Mammary epithelial cell (primary cell): ENCODE measurements at regions of chr1 and their contacts with region 1.

Region 1: DNA sequence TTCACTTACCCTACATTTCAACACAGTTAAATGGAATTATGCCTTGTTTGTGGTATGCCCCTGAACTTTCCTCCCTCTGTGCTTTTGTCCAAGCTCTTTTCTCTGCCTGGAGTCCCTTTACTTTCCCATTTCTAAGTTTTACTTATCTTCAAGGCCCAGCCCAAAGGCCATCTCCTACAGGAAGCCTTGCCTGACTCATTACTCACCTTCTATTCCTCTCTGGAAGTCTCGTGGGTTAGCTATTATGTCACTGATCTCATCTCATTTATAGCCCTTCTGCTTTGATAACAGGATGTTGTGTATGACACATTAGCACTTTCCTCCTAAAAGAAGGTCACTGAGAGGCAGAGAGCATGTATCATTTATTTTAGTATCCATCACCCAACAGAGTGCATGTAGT is 78.8 kb upstream of the CD1D start:
- DNase-seq: peak; percentile 75
- H3K4me3 ChIP-seq: no peak overlapping the region
- H3K27ac ChIP-seq: no peak overlapping the region
- H3K4me1 ChIP-seq: peaks cover 14% of the 10 kb centered on the region
- H3K27me3 ChIP-seq: no peaks in the 10 kb centered on the region
- CTCF ChIP-seq: no peak

Region 2: DNA sequence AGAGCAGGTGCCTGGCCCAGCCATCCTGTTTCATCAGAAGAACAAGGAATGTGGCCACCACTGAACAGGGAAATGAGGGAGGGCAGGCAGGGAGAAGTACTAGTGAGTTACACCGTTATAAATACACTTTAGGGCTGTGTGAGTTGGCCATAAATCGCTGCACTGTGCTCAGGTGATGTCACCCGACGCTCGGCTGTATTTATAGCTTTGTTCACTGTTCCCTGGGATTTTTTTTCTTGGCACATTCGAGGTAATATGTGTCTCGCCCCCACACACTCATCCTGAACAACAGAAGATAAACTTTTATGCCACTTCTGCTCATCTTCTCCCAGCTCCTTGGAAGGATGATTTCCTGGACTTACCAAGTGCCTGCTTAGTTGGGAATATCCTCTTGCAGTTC is 117.5 kb before region 1 on chr1:
- CTCF ChIA-PET with region 1: no interaction called
- dilution Hi-C with region 1: no loop called
- in situ Hi-C with region 1: loop called in 1 of 2 experiments (anchors 10 kb)
- intact Hi-C with region 1: no loop called
- DNase-seq: no peak
- H3K4me3 ChIP-seq: no peak overlapping the region
- H3K27ac ChIP-seq: no peak overlapping the region
- H3K4me1 ChIP-seq: no peaks in the 10 kb centered on the region
- H3K27me3 ChIP-seq: no peaks in the 10 kb centered on the region
- CTCF ChIP-seq: no peak